ENCODE measurements at regions of chr6 and their contacts with region 1.

Region 1: GRCh38 chr6:32971581-32972352 is 3.4 kb downstream of the BRD2 start:
- DNase-seq: peak; percentile 84 to 100 (median 92)
- ATAC-seq: peak; percentile 55
- H3K4me3 ChIP-seq: peak overlapping the region; percentile 70
- H3K27ac ChIP-seq: peak overlapping the region; percentile 99
- H3K4me1 ChIP-seq: peaks cover 19 to 23% of the 10 kb centered on the region in 2 experiments; a peak in 4 of 5 replicates
- H3K27me3 ChIP-seq: no peaks in the 10 kb centered on the region
- CTCF ChIP-seq: no peak
- EP300 ChIP-seq: peak; percentile 34; the same call in 1 of the 2 replicates
- POLR2A ChIP-seq: peak; percentile 100
- RAD21 ChIP-seq: peak in 1 of 2 experiments; percentile 11; a peak in 1 of 4 replicates

Region 2: GRCh38 chr6:31541658-31542521 is 1429.9 kb before region 1 on chr6 and contains the start of gene DDX39B:
- CTCF ChIA-PET with region 1: no interaction called
- POLR2A ChIA-PET with region 1: no interaction called
- in situ Hi-C with region 1: loop called (anchors 25 kb)
- intact Hi-C with region 1: no loop called
- DNase-seq: peak; percentile 92 to 99 (median 95)
- ATAC-seq: peak; percentile 86
- H3K4me3 ChIP-seq: peak within 1 kb of the TSS; percentile 76
- H3K27ac ChIP-seq: peak within 1 kb of the TSS; percentile 98
- H3K4me1 ChIP-seq: peaks cover 10 to 24% of the 10 kb centered on the region in 2 experiments; a peak in 4 of 5 replicates
- H3K27me3 ChIP-seq: no peaks in the 10 kb centered on the region
- CTCF ChIP-seq: no peak
- EP300 ChIP-seq: peak; percentile 35; the same call in 1 of the 2 replicates
- POLR2A ChIP-seq: peak; percentile 99
- RAD21 ChIP-seq: no peak
- polyA plus RNA-seq, gene DDX39B: 479 to 565 TPM

Region 3: GRCh38 chr6:32825966-32826365 is 145.8 kb before region 1 on chr6:
- CTCF ChIA-PET with region 1: interaction called, 3 read pairs
- POLR2A ChIA-PET with region 1: interaction called, 13 read pairs
- in situ Hi-C with region 1: no loop called
- intact Hi-C with region 1: no loop called
- DNase-seq: peak in 1 of 4 experiments; percentile 32
- ATAC-seq: peak; percentile 77
- H3K4me3 ChIP-seq: no peak overlapping the region
- H3K27ac ChIP-seq: no peak overlapping the region
- H3K4me1 ChIP-seq: no peaks in the 10 kb centered on the region
- H3K27me3 ChIP-seq: no peaks in the 10 kb centered on the region
- CTCF ChIP-seq: peak; percentile 46 to 65 (median 46); a peak in 4 of 6 replicates
- EP300 ChIP-seq: no peak
- POLR2A ChIP-seq: no peak
- RAD21 ChIP-seq: peak; percentile 57 to 77

Region 4: GRCh38 chr6:32853541-32854375 is 118.0 kb before region 1 on chr6 and contains the starts of genes PSMB9 and TAP1:
- CTCF ChIA-PET with region 1: no interaction called
- POLR2A ChIA-PET with region 1: interaction called, 18 read pairs
- in situ Hi-C with region 1: no loop called
- intact Hi-C with region 1: no loop called
- DNase-seq: peak; percentile 94 to 96 (median 95)
- ATAC-seq: peak; percentile 98
- H3K4me3 ChIP-seq: peak within 1 kb of the TSS; percentile 65
- H3K27ac ChIP-seq: peak within 1 kb of the TSS; percentile 61
- H3K4me1 ChIP-seq: peaks cover 27 to 30% of the 10 kb centered on the region in 2 experiments
- H3K27me3 ChIP-seq: peaks cover 17 to 47% of the 10 kb centered on the region in 2 experiments
- CTCF ChIP-seq: peak; percentile 91 to 98 (median 98)
- EP300 ChIP-seq: 0 out of 2 replicates have a peak, but pooled peaks have one; percentile 33
- POLR2A ChIP-seq: no peak; the same call in 1 of the 2 replicates
- RAD21 ChIP-seq: peak; percentile 84 to 87
- polyA plus RNA-seq, gene PSMB9: 1.9 to 2.8 TPM
- polyA plus RNA-seq, gene TAP1: 1.3 to 1.7 TPM

Region 5: GRCh38 chr6:32912951-32913350 is 58.8 kb before region 1 on chr6:
- CTCF ChIA-PET with region 1: no interaction called
- POLR2A ChIA-PET with region 1: interaction called, 18 read pairs
- in situ Hi-C with region 1: no loop called
- intact Hi-C with region 1: no loop called
- DNase-seq: no peak
- ATAC-seq: no peak
- H3K4me3 ChIP-seq: no peak overlapping the region
- H3K27ac ChIP-seq: no peak overlapping the region
- H3K4me1 ChIP-seq: no peaks in the 10 kb centered on the region
- H3K27me3 ChIP-seq: peaks cover 4 to 10% of the 10 kb centered on the region in 2 experiments; a peak in 2 of 5 replicates
- CTCF ChIP-seq: no peak
- EP300 ChIP-seq: no peak
- POLR2A ChIP-seq: no peak
- RAD21 ChIP-seq: no peak

Region 6: GRCh38 chr6:32940656-32941213 is 31.0 kb before region 1 on chr6 and contains the start of gene HLA-DMB:
- CTCF ChIA-PET with region 1: no interaction called
- POLR2A ChIA-PET with region 1: interaction called, 21 read pairs
- in situ Hi-C with region 1: no loop called
- intact Hi-C with region 1: no loop called
- DNase-seq: peak in 2 of 4 experiments; percentile 33 to 58
- ATAC-seq: peak; percentile 90
- H3K4me3 ChIP-seq: no peak within 1 kb of the TSS
- H3K27ac ChIP-seq: no peak within 1 kb of the TSS
- H3K4me1 ChIP-seq: no peaks in the 10 kb centered on the region
- H3K27me3 ChIP-seq: peaks cover 27 to 41% of the 10 kb centered on the region in 2 experiments
- CTCF ChIP-seq: no peak
- EP300 ChIP-seq: no peak
- POLR2A ChIP-seq: no peak
- RAD21 ChIP-seq: no peak
- polyA plus RNA-seq, gene HLA-DMB: not detected

Region 7: GRCh38 chr6:33000055-33000454 is 28.3 kb after region 1 on chr6:
- CTCF ChIA-PET with region 1: no interaction called
- POLR2A ChIA-PET with region 1: interaction called, 14 read pairs
- in situ Hi-C with region 1: no loop called
- intact Hi-C with region 1: no loop called
- DNase-seq: peak in 2 of 4 experiments; percentile 55 to 63
- ATAC-seq: peak; percentile 96
- H3K4me3 ChIP-seq: no peak overlapping the region
- H3K27ac ChIP-seq: no peak overlapping the region
- H3K4me1 ChIP-seq: no peaks in the 10 kb centered on the region
- H3K27me3 ChIP-seq: peaks cover 13 to 26% of the 10 kb centered on the region in 2 experiments
- CTCF ChIP-seq: peak; percentile 63 to 77 (median 66)
- EP300 ChIP-seq: no peak
- POLR2A ChIP-seq: no peak
- RAD21 ChIP-seq: peak; percentile 37 to 77

Measured in K562 (cell line).